ENCODE measurements at regions of chr17 and their contacts with region 1.

Region 1: DNA sequence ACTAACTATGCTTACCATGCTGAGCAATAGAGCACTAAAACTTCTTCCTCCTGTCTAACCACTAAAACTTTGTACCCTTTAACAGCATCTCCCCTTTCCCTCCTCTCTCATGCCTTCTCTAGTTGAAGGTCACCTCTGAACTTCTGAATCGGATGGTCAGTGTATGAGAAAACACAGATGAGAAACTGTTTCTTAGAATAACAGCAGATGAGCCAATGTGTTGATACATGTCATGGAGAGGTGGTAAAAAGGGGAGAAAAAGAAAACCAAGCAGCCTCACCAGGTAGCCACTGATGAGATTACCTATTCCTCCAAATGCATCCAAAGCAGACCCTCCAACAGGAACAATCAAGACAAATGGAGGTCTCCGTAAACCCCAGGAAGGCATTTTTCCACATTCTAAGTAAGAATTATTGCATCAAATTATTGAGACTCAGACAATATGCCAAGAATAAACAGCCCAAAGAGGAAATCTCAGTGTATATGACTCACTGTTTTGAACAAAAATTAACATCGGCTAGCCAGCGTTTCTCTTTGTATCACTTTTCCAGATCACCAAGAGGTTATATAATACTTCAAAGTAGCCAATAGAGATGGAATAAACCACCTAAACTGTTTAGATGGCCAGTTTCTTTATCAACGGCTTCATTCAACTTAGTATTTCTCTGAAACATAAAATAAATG is 793.3 kb upstream of the SOX9 start:
- DNase-seq: peak; percentile 51
- ATAC-seq: peak; percentile 31; the same call in 1 of the 2 replicates
- H3K4me3 ChIP-seq: no peak overlapping the region
- H3K27ac ChIP-seq: no peak overlapping the region
- H3K4me1 ChIP-seq: peaks cover 25% of the 10 kb centered on the region
- H3K27me3 ChIP-seq: no peaks in the 10 kb centered on the region
- CTCF ChIP-seq: no peak

Region 2: GRCh38 chr17:71110326-71110725 is 217.2 kb before region 1 on chr17:
- CTCF ChIA-PET with region 1: no interaction called
- POLR2A ChIA-PET with region 1: no interaction called
- intact Hi-C with region 1: loop called (anchors 5 kb)
- DNase-seq: peak; percentile 49
- ATAC-seq: peak; percentile 55
- H3K4me3 ChIP-seq: no peak overlapping the region
- H3K27ac ChIP-seq: no peak overlapping the region
- H3K4me1 ChIP-seq: peaks cover 19% of the 10 kb centered on the region
- H3K27me3 ChIP-seq: no peaks in the 10 kb centered on the region
- CTCF ChIP-seq: no peak

Region 3: GRCh38 chr17:71455219-71455618 is 127.7 kb after region 1 on chr17:
- CTCF ChIA-PET with region 1: no interaction called
- POLR2A ChIA-PET with region 1: no interaction called
- intact Hi-C with region 1: loop called (anchors 2 kb)
- DNase-seq: peak; percentile 79
- ATAC-seq: peak; percentile 90
- H3K4me3 ChIP-seq: no peak overlapping the region
- H3K27ac ChIP-seq: peak overlapping the region; percentile 56
- H3K4me1 ChIP-seq: peaks cover 20% of the 10 kb centered on the region
- H3K27me3 ChIP-seq: no peaks in the 10 kb centered on the region
- CTCF ChIP-seq: no peak

Measured in PC-3 (cell line).